ENCODE measurements at regions of chr17 and their contacts with region 1.

Region 1: GRCh38 chr17:9768381-9768934 is 22.9 kb downstream of the DHRS7C start:
- DNase-seq: no peak
- H3K4me3 Mint-ChIP-seq: no peak overlapping the region
- H3K27ac Mint-ChIP-seq: no peak overlapping the region
- H3K4me1 Mint-ChIP-seq: no peaks in the 10 kb centered on the region
- H3K27me3 Mint-ChIP-seq: peaks cover 9% of the 10 kb centered on the region

Region 2: GRCh38 chr17:9389110-9389509 is 379.3 kb before region 1 on chr17:
- CTCF ChIA-PET with region 1: no interaction called
- intact Hi-C with region 1: no loop called
- DNase-seq: peak; percentile 9
- H3K4me3 Mint-ChIP-seq: no peak overlapping the region
- H3K27ac Mint-ChIP-seq: no peak overlapping the region
- H3K4me1 Mint-ChIP-seq: peaks cover 8% of the 10 kb centered on the region
- H3K27me3 Mint-ChIP-seq: no peaks in the 10 kb centered on the region

Region 3: DNA sequence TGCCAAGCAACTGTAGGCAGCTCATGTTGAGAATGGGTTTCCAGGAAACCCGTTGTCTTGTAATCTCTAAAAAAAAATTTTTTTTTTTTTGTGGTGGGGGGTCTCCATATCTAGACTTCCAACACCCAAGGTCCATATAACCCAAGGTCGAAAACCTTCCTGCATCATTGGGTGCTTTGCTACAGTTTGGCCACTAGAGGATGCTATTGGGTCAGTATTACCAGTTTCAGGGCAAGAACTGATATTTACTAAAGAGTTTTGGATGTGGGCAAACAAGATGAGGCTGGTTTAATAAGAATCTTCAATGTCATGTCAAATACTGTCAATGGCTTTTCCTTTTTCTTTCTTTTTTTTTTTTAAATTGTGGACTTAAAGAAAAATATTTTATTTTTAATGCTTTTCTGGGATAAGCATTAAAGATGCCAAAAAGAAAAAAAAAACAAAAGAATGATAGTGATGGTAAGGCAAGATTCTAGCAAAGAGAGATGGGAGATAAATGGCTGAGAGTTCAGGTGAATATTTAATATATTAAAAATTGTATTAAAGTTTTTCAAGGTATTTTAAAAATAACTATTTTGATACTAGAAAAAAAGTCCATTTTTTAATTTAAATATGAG is 39.3 kb before region 1 on chr17:
- CTCF ChIA-PET with region 1: interaction called, 4 read pairs
- intact Hi-C with region 1: loop called (anchors 5 kb)
- DNase-seq: peak; percentile 21
- H3K4me3 Mint-ChIP-seq: no peak overlapping the region
- H3K27ac Mint-ChIP-seq: no peak overlapping the region
- H3K4me1 Mint-ChIP-seq: no peaks in the 10 kb centered on the region
- H3K27me3 Mint-ChIP-seq: peaks cover 6% of the 10 kb centered on the region

Measured in activated naive CD4-positive, alpha-beta T cell treated with anti-CD3 and anti-CD28 coated beads for 36 hours (primary cell).